Activated CD8-positive, alpha-beta T cell treated with anti-CD3 and anti-CD28 coated beads for 36 hours (primary cell): ENCODE measurements at regions of chr5 and their contacts with region 1.

Region 1: GRCh38 chr5:128905571-128906110 is 59.6 kb upstream of the SLC27A6 start:
- DNase-seq: peak; percentile 40
- ATAC-seq: peak; percentile 76
- H3K4me3 Mint-ChIP-seq: no peak overlapping the region
- H3K27ac Mint-ChIP-seq: no peak overlapping the region
- H3K4me1 Mint-ChIP-seq: no peaks in the 10 kb centered on the region
- H3K27me3 Mint-ChIP-seq: no peaks in the 10 kb centered on the region
- CTCF ChIP-seq: peak; percentile 87

Region 2: DNA sequence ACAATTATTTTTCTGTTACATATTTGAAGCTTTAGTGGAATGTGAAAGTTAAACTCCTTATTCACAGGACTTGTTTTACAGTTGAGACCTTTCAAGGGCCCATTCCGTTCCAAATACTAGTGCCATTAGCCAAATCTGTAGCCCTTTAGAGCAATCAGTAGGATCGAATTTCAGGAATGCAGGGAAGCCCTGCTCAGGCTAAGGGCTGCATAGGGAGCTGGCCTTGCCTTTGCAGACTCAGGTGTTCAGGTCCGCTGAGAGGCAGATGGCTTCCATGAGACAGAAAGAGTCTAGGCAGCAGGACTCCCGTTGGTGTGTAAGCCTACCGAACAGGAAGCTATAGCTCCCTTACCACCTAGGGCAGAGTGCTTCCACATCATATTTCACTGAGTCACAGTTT is 90.4 kb before region 1 on chr5:
- CTCF ChIA-PET with region 1: no interaction called
- POLR2A ChIA-PET with region 1: no interaction called
- intact Hi-C with region 1: no loop called
- DNase-seq: no peak
- ATAC-seq: no peak
- H3K4me3 Mint-ChIP-seq: no peak overlapping the region
- H3K27ac Mint-ChIP-seq: no peak overlapping the region
- H3K4me1 Mint-ChIP-seq: no peaks in the 10 kb centered on the region
- H3K27me3 Mint-ChIP-seq: no peaks in the 10 kb centered on the region
- CTCF ChIP-seq: no peak

Region 3: DNA sequence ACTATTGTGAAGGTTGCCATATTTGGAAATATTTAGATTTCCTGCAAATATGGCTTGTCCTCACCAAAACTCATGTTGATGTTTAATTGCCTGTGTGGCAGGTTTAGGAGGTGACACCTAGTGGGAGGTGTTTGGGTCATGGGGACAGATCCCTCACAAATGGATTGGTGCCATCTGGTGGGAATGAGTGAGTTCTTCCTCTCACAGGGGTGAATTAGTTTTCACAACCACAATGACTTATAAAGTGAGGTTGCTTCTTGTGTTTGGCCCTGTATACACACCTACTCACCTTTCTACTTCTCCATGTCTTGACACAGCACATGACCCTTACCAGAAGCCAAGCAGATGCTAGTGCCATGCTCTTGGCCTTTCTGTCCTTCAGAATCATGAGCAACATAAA is 230.0 kb after region 1 on chr5:
- CTCF ChIA-PET with region 1: interaction called, 3 read pairs
- POLR2A ChIA-PET with region 1: no interaction called
- intact Hi-C with region 1: loop called (anchors 10 kb)
- DNase-seq: peak; percentile 23
- ATAC-seq: peak; percentile 68
- H3K4me3 Mint-ChIP-seq: no peak overlapping the region
- H3K27ac Mint-ChIP-seq: no peak overlapping the region
- H3K4me1 Mint-ChIP-seq: no peaks in the 10 kb centered on the region
- H3K27me3 Mint-ChIP-seq: no peaks in the 10 kb centered on the region
- CTCF ChIP-seq: no peak